Left colon (tissue), 2 donors: ENCODE measurements at regions of chr10 and their contacts with region 1.

Region 1: GRCh38 chr10:73534857-73535256 is 39.0 kb upstream of the PPP3CB start:
- DNase-seq: no peak
- ATAC-seq: no peak

Region 2: GRCh38 chr10:73635781-73636180 is 100.9 kb after region 1 on chr10:
- intact Hi-C with region 1: loop called in 1 of 2 experiments (anchors 5 kb)
- DNase-seq: no peak
- ATAC-seq: no peak